SK-N-SH (cell line): ENCODE measurements at regions of chr1 and their contacts with region 1.

Region 1: GRCh38 chr1:223683586-223684487 is 18.3 kb upstream of the CAPN8 start:
- DNase-seq: peak; percentile 60
- H3K4me3 ChIP-seq: no peak overlapping the region; a peak in 1 of 4 replicates
- H3K27ac ChIP-seq: no peak overlapping the region
- H3K4me1 ChIP-seq: no peaks in the 10 kb centered on the region; a peak in 1 of 4 replicates
- H3K27me3 ChIP-seq: peaks cover 33% of the 10 kb centered on the region; the same call in 1 of the 2 replicates
- CTCF ChIP-seq: peak; percentile 73
- EP300 ChIP-seq: no peak
- RAD21 ChIP-seq: peak; percentile 94

Region 2: GRCh38 chr1:223531742-223532341 is 152.0 kb before region 1 on chr1:
- CTCF ChIA-PET with region 1: interaction called, 28 read pairs
- POLR2A ChIA-PET with region 1: no interaction called
- DNase-seq: peak; percentile 59
- H3K4me3 ChIP-seq: no peak overlapping the region
- H3K27ac ChIP-seq: no peak overlapping the region
- H3K4me1 ChIP-seq: no peaks in the 10 kb centered on the region
- H3K27me3 ChIP-seq: peaks cover 11% of the 10 kb centered on the region; the same call in 1 of the 2 replicates
- CTCF ChIP-seq: peak; percentile 65
- EP300 ChIP-seq: no peak
- RAD21 ChIP-seq: peak; percentile 65

Region 3: DNA sequence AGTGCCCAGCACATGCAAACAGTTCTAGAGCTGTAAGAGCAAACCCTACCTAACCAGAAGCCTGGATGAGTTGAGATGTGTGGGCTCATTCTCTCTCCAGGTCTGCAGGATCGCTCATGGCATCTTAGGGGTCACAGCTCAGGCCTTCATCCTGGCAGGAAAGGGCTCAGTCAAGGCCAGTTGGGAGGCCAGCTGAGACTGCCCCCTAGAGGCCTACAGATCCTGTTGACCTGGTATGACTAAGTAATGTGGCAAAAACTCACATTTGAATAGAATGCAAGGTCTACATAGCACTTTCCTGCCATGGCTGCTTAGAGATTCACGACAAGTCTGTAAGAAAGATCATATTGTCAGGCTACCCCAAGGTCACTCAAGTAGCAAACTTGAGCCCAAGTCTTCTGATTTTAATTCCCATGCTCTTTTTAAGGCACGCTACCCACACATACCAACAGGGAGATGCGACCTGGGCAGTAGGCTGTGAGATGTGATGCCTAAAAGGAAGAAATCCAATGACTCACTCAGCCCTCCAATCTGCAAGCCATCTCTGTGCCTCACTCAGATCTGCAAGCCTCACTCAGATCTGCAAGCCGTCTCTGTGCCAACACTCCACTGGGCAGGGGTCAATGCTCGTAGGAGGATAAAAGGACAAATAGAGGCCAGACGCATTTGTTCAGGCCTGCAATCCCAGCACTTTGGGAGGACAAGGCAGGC is 13.2 kb before region 1 on chr1:
- CTCF ChIA-PET with region 1: interaction called, 17 read pairs
- POLR2A ChIA-PET with region 1: no interaction called
- DNase-seq: peak; percentile 46
- H3K4me3 ChIP-seq: no peak overlapping the region
- H3K27ac ChIP-seq: no peak overlapping the region
- H3K4me1 ChIP-seq: no peaks in the 10 kb centered on the region
- H3K27me3 ChIP-seq: no peaks in the 10 kb centered on the region; the same call in 1 of the 2 replicates
- CTCF ChIP-seq: peak; percentile 53
- EP300 ChIP-seq: no peak
- RAD21 ChIP-seq: peak; percentile 54